PC-3 (cell line): ENCODE measurements at regions of chr1 and their contacts with region 1.

Region 1: DNA sequence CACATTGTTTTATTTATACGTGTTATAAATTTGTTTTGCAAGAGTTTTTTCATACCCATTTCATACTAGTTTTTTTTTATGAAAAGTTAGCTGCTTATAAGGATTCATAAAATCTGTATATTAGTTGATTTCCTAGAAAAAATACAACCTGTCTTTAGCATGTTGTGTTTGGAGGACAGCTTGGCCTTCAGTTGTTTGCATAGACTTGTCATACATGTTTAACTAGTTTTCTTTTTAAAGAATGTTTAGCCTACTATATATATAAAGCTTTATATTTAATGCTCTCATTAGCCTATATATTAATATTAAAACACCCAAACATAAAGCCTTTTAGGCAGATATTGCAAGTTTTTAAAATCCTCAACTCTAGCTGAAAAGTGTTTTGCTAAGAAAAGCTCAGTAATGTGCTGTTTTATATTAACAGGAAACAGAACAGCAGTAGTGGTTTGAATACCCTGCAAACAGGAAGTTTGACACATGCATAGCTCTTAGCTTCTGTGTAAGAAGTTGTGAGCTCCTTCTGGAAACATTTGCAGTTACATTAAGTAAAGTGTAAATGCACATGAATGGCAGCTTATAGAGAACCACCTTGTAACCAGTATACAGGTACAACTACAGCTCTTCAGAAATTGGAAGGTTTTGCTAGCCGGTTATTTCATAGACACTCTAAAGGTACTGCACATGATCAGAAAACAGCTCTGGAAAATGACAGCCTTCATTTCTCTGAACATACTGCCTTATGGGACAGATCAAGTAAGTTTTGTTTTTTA is at the start of gene PRKACB:
- DNase-seq: peak; percentile 63
- ATAC-seq: peak; percentile 70
- H3K4me3 ChIP-seq: no peak within 1 kb of the TSS; the same call in 1 of the 2 replicates
- H3K27ac ChIP-seq: peak within 1 kb of the TSS; percentile 77
- H3K4me1 ChIP-seq: peaks cover 39% of the 10 kb centered on the region
- H3K27me3 ChIP-seq: no peaks in the 10 kb centered on the region
- CTCF ChIP-seq: no peak
- total RNA-seq, gene PRKACB: 7.8 and 8.3 TPM in 2 replicates

Region 2: GRCh38 chr1:84247425-84248220 is 103.6 kb after region 1 on chr1:
- CTCF ChIA-PET with region 1: no interaction called
- POLR2A ChIA-PET with region 1: no interaction called
- intact Hi-C with region 1: loop called (anchors 1 kb)
- DNase-seq: peak; percentile 98
- ATAC-seq: peak; percentile 95
- H3K4me3 ChIP-seq: peak overlapping the region; percentile 51
- H3K27ac ChIP-seq: peak overlapping the region; percentile 98
- H3K4me1 ChIP-seq: peaks cover 35% of the 10 kb centered on the region
- H3K27me3 ChIP-seq: no peaks in the 10 kb centered on the region
- CTCF ChIP-seq: no peak

Region 3: GRCh38 chr1:84365225-84366221 is 221.5 kb after region 1 on chr1:
- CTCF ChIA-PET with region 1: no interaction called
- POLR2A ChIA-PET with region 1: no interaction called
- intact Hi-C with region 1: loop called (anchors 1 kb)
- DNase-seq: peak; percentile 99
- ATAC-seq: peak; percentile 94
- H3K4me3 ChIP-seq: no peak overlapping the region
- H3K27ac ChIP-seq: peak overlapping the region; percentile 70
- H3K4me1 ChIP-seq: peaks cover 36% of the 10 kb centered on the region
- H3K27me3 ChIP-seq: no peaks in the 10 kb centered on the region
- CTCF ChIP-seq: no peak

Region 4: GRCh38 chr1:84541679-84542078 is 397.7 kb after region 1 on chr1:
- CTCF ChIA-PET with region 1: no interaction called
- POLR2A ChIA-PET with region 1: no interaction called
- intact Hi-C with region 1: loop called (anchors 2 kb)
- DNase-seq: peak; percentile 14
- ATAC-seq: no peak
- H3K4me3 ChIP-seq: no peak overlapping the region
- H3K27ac ChIP-seq: no peak overlapping the region
- H3K4me1 ChIP-seq: peaks cover 16% of the 10 kb centered on the region
- H3K27me3 ChIP-seq: no peaks in the 10 kb centered on the region
- CTCF ChIP-seq: peak; percentile 65

Region 5: DNA sequence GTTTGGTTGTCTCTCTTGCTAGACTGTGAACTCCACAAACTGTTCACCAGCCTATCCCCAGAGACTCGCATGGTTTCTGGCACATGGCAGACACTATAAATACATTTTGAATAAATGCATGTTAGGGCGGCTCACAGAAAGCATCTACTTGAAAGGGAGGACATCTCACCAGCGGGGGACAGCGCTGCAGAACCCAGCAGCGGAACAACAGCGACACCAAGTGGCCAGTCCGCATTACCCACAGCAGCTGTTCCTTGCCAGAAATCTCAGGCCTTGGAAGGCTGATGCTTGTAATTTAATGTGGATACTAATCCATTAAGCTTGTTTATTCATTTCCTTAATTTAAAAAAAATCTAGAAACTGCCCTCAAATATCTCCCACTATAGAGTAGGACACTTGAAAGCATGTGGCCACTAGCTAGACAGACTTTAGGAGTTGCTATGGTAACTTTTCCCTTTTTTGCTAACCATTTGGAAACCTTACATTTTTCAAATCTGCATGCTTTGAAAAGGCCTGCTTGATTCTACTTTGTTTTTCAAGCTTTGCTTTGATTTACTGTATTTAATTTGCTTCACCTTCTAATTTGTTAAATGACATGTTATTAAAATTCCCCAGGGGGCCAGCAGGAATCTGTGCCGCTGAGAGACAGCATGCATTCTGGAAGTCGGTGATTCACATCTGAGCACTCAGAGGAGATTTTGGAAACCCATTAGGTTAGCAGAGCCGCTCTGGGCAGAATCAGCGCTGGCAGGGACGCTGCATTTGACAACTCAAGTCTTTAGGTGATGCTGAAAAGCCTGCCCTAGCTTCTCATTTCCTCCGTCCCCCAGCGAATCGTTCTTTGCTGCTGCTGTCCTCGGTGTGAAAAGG is 609.8 kb after region 1 on chr1:
- CTCF ChIA-PET with region 1: no interaction called
- POLR2A ChIA-PET with region 1: no interaction called
- intact Hi-C with region 1: loop called (anchors 5 kb)
- DNase-seq: peak; percentile 82
- ATAC-seq: peak; percentile 89
- H3K4me3 ChIP-seq: no peak overlapping the region
- H3K27ac ChIP-seq: no peak overlapping the region
- H3K4me1 ChIP-seq: 0 out of 2 replicates have a peak, but pooled peaks cover 4% of the 10 kb centered on the region
- H3K27me3 ChIP-seq: no peaks in the 10 kb centered on the region
- CTCF ChIP-seq: peak; percentile 97